Calu3 (cell line): ENCODE measurements at regions of chr1 and their contacts with region 1.

Region 1: GRCh38 chr1:155084722-155085503 is 6.3 kb downstream of the EFNA3 start:
- DNase-seq: peak; percentile 97
- H3K4me3 Mint-ChIP-seq: peak overlapping the region; percentile 96
- H3K27ac Mint-ChIP-seq: peak overlapping the region; percentile 62
- H3K4me1 Mint-ChIP-seq: peaks cover 44% of the 10 kb centered on the region
- H3K27me3 Mint-ChIP-seq: peaks cover 44% of the 10 kb centered on the region
- CTCF ChIP-seq: peak; percentile 88

Region 2: DNA sequence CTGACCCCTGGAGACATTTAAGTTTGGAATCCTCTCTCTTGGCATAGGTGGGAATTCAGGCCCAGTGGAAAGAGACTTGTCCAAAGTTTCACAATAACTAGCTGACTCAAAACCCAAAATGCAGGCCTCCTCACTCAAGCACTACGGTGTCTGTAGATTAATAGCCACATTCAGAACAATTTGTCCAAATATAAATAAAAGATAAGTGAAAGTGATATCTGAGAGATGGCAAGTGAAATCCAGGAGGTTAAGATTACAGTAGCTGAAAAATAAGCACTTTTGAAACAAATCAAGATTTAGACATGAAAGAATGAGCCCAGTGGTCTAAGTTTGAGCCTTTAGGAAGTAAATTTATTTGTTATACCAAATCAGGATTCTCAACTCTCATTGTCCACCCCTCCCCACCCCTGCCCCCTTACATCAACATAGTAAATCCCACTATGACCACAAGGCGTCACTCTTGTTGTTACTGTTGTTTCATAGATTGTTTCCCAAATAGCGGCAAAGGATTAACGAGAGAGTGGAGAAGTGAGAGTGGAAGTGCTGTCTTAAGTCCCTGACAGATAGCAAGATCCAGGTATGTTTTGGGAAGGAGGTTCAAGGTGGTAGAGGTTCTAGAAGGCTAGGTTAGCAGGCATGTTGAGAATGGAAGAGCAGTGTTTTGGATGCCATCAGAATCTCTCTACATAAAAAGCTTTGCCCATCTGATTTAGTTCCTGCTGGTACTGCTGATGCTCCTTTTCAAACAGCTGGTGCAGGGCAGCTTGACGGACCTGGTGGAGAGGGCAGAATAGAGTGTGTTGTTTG is 886.0 kb before region 1 on chr1:
- CTCF ChIA-PET with region 1: no interaction called
- intact Hi-C with region 1: no loop called
- DNase-seq: peak; percentile 53
- H3K4me3 Mint-ChIP-seq: no peak overlapping the region
- H3K27ac Mint-ChIP-seq: no peak overlapping the region
- H3K4me1 Mint-ChIP-seq: no peaks in the 10 kb centered on the region
- H3K27me3 Mint-ChIP-seq: peaks cover 20% of the 10 kb centered on the region
- CTCF ChIP-seq: peak; percentile 57

Region 3: GRCh38 chr1:154669464-154670282 is 415.2 kb before region 1 on chr1:
- CTCF ChIA-PET with region 1: interaction called, 14 read pairs
- intact Hi-C with region 1: no loop called
- DNase-seq: peak; percentile 80
- H3K4me3 Mint-ChIP-seq: no peak overlapping the region
- H3K27ac Mint-ChIP-seq: no peak overlapping the region
- H3K4me1 Mint-ChIP-seq: no peaks in the 10 kb centered on the region
- H3K27me3 Mint-ChIP-seq: peaks cover 22% of the 10 kb centered on the region
- CTCF ChIP-seq: peak; percentile 82

Region 4: DNA sequence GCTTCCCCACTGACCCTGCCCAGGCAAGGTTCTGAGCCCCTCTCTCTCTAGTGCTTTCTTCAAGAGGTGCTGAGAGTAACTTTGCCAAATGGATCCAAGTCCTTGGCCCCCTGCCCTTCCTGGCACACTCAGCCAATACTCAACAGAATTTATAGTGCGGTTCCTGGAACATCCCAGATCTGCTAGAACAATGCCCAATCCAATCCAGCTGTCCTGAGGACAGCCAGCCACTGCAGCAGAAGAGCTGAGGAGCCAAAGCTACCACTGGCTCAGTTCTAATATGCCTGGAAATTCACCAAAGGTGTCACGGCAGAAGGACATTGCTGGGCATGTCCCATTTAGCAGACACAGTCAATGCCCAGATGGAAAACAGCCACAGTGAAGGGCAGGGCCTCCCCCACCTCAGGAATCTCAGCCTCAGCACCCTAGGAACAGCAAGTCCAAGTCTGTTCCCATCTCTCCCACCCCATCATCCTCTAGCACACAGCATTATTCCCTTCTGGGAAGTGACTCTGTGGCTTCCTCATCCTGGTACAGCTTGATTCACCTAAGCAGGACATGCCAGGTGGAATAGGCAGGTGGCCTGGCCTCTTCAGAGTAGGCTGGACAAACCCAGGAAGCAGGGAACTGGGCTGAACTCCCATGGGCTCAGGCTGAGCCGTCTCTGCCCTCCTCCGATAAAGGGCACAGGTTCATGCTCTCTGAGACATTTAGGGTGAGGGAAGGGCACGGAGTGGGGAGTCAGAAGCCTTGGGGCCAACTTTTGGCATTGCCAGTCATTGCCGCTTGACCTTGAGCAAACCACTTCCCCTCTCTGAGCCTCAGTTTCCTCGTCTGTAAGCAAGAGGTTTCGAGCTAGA is 173.0 kb before region 1 on chr1:
- CTCF ChIA-PET with region 1: no interaction called
- intact Hi-C with region 1: no loop called
- DNase-seq: no peak
- H3K4me3 Mint-ChIP-seq: no peak overlapping the region
- H3K27ac Mint-ChIP-seq: no peak overlapping the region
- H3K4me1 Mint-ChIP-seq: peaks cover 12% of the 10 kb centered on the region
- H3K27me3 Mint-ChIP-seq: peaks cover 21% of the 10 kb centered on the region
- CTCF ChIP-seq: no peak

Region 5: DNA sequence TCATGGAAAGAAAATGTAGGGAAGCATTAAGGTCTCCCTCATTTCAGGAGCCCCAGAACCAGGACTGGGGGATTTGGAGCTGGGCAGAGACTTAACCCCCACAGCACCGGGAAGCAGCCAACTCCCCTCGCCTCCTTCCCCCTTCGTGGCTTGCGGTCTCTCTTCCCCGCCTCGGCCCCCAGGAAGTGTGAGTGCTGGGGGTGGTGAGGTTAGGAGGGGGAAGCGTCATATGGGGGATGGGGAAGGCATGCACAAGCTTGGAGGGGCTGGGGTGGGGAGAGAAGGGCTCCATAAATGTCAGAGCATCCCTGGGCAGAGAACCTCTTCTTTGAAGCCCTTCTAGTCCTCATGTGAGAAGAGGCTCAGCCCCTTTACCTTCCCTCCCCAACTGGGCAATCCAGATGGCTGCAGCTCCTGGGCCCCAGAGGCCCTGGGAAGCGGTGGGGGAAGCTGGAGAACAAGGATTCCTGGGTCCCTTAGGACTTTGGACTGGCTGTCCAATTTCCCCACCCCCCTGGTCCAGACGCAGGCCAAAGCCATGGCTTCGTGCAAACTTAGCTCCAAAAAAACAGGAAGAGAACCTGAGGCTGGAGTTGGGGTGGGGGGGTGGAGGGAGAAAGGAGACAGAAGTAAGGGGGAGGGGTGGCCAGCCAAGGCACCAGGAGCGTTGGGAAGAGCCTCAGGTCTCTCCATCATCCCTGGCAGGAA is 74.5 kb before region 1 on chr1:
- CTCF ChIA-PET with region 1: no interaction called
- intact Hi-C with region 1: no loop called
- DNase-seq: no peak
- H3K4me3 Mint-ChIP-seq: no peak overlapping the region
- H3K27ac Mint-ChIP-seq: no peak overlapping the region
- H3K4me1 Mint-ChIP-seq: peaks cover 31% of the 10 kb centered on the region
- H3K27me3 Mint-ChIP-seq: no peaks in the 10 kb centered on the region
- CTCF ChIP-seq: no peak

Region 6: GRCh38 chr1:155050560-155051341 is 34.2 kb before region 1 on chr1 and contains the start of gene ADAM15:
- CTCF ChIA-PET with region 1: interaction called, 26 read pairs
- intact Hi-C with region 1: loop called (anchors 5 kb)
- DNase-seq: peak; percentile 94
- H3K4me3 Mint-ChIP-seq: peak within 1 kb of the TSS; percentile 91
- H3K27ac Mint-ChIP-seq: peak within 1 kb of the TSS; percentile 68
- H3K4me1 Mint-ChIP-seq: peaks cover 26% of the 10 kb centered on the region
- H3K27me3 Mint-ChIP-seq: no peaks in the 10 kb centered on the region
- CTCF ChIP-seq: peak; percentile 97
- total RNA-seq, gene ADAM15: 99.1 and 103 TPM in 2 replicates

Region 7: DNA sequence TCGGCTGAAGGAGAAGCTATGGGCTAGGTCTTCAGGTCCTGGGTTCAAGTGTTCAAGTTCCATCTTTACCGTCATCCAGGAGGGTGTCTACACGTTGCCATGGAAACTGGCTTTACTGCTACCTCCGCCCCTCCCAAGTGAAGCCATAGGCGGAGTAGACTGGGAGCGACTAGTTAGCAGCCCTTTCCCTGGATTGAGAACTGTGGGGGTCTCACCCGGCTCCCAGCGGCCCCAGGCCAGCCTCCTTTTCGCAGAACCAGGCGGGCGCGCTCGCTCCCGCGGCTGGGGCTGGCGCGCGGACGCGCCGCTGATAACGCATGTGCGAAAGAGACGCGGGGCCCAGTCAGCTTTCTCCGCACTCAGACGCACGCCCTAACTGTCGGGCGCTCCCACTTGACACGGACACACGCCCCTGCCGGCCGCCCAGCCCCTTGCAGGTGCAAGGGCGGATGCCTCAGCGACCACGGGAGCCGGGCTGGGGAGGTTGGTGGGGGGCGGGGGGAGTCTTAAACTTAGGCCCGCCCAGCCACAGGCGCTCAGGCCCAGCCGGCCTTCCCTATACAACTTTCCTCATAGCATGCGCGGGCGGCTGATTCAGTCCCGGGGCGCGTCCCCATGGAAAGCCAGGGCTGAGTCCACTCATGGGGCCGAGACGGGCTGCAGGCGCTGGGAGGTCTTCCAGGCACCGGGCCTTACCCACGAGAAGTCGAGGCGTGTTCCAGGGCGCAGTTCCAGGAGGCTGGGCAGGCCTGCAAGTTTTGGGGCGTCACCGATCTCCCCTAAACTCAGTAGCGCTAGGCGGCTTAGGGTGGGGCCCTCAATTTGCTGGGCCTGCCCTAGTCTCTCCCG is 14.0 kb before region 1 on chr1:
- CTCF ChIA-PET with region 1: interaction called, 15 read pairs
- intact Hi-C with region 1: no loop called
- DNase-seq: peak; percentile 87
- H3K4me3 Mint-ChIP-seq: peak overlapping the region; percentile 31
- H3K27ac Mint-ChIP-seq: peak overlapping the region; percentile 17
- H3K4me1 Mint-ChIP-seq: peaks cover 18% of the 10 kb centered on the region
- H3K27me3 Mint-ChIP-seq: peaks cover 50% of the 10 kb centered on the region
- CTCF ChIP-seq: peak; percentile 71

Region 8: GRCh38 chr1:155167166-155168104 is 82.5 kb after region 1 on chr1:
- CTCF ChIA-PET with region 1: interaction called, 22 read pairs
- intact Hi-C with region 1: no loop called
- DNase-seq: peak; percentile 93
- H3K4me3 Mint-ChIP-seq: peak overlapping the region; percentile 53
- H3K27ac Mint-ChIP-seq: no peak overlapping the region
- H3K4me1 Mint-ChIP-seq: peaks cover 7% of the 10 kb centered on the region
- H3K27me3 Mint-ChIP-seq: no peaks in the 10 kb centered on the region
- CTCF ChIP-seq: peak; percentile 91

Region 9: GRCh38 chr1:155185351-155186066 is 100.6 kb after region 1 on chr1:
- CTCF ChIA-PET with region 1: no interaction called
- intact Hi-C with region 1: no loop called
- DNase-seq: peak; percentile 58
- H3K4me3 Mint-ChIP-seq: no peak overlapping the region
- H3K27ac Mint-ChIP-seq: no peak overlapping the region
- H3K4me1 Mint-ChIP-seq: peaks cover 37% of the 10 kb centered on the region
- H3K27me3 Mint-ChIP-seq: peaks cover 57% of the 10 kb centered on the region
- CTCF ChIP-seq: no peak